ENCODE measurements at regions of chr17 and their contacts with region 1.

Region 1: GRCh38 chr17:38544839-38545209 is 60.9 kb downstream of the SRCIN1 start:
- DNase-seq: no peak
- H3K4me3 ChIP-seq: no peak overlapping the region
- CTCF ChIP-seq: no peak

Region 2: GRCh38 chr17:38605888-38606645 is 61.2 kb after region 1 on chr17 and contains the start of gene SRCIN1:
- in situ Hi-C with region 1: loop called (anchors 10 kb)
- DNase-seq: no peak
- H3K4me3 ChIP-seq: peak within 1 kb of the TSS; percentile 36
- CTCF ChIP-seq: peak; percentile 71